ENCODE measurements at regions of chr2 and their contacts with region 1.

Region 1: DNA sequence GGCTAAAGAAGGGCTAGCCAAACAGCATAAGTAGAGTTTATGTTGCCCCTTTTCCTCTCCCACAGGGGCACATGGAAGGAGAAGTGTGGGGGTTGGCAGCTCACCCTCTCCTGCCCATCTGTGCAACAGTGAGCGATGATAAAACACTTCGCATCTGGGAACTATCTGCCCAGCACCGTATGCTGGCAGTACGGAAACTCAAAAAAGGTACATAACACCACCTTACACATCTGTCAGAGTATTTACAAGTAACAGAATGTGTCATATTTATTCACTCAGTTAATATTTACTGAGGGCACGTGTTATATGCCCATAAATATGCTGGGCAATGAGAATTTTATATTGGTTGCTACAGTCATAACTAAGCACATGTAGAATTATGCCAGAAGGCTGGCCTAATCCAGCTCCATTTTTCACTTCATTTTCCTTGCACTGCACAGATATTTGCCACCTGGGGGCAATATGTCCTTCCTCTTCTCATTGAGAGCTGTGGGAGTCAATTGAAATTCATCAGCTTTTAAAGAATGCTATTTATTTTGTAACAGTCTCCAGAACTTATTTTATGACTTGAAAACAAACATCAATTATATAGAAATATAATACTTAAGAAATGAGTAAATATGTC is 150.6 kb downstream of the RTN4 start:
- DNase-seq: no peak
- H3K4me3 ChIP-seq: no peak overlapping the region
- H3K27ac ChIP-seq: no peak overlapping the region
- H3K4me1 ChIP-seq: no peaks in the 10 kb centered on the region
- H3K27me3 ChIP-seq: peaks cover 37% of the 10 kb centered on the region
- CTCF ChIP-seq: peak; percentile 65

Region 2: GRCh38 chr2:54597153-54597848 is 302.4 kb before region 1 on chr2:
- intact Hi-C with region 1: no loop called
- DNase-seq: peak; percentile 77
- H3K4me3 ChIP-seq: no peak overlapping the region
- H3K27ac ChIP-seq: peak overlapping the region; percentile 80
- H3K4me1 ChIP-seq: peaks cover 99% of the 10 kb centered on the region
- H3K27me3 ChIP-seq: no peaks in the 10 kb centered on the region
- CTCF ChIP-seq: no peak

Region 3: GRCh38 chr2:54723131-54723995 is 176.3 kb before region 1 on chr2 and contains the start of gene EML6:
- intact Hi-C with region 1: no loop called
- DNase-seq: peak; percentile 97
- H3K4me3 ChIP-seq: peak within 1 kb of the TSS; percentile 87
- H3K27ac ChIP-seq: peak within 1 kb of the TSS; percentile 83
- H3K4me1 ChIP-seq: peaks cover 25% of the 10 kb centered on the region
- H3K27me3 ChIP-seq: peaks cover 5% of the 10 kb centered on the region
- CTCF ChIP-seq: peak; percentile 44
- total RNA-seq, gene EML6: 0.77 TPM

Region 4: DNA sequence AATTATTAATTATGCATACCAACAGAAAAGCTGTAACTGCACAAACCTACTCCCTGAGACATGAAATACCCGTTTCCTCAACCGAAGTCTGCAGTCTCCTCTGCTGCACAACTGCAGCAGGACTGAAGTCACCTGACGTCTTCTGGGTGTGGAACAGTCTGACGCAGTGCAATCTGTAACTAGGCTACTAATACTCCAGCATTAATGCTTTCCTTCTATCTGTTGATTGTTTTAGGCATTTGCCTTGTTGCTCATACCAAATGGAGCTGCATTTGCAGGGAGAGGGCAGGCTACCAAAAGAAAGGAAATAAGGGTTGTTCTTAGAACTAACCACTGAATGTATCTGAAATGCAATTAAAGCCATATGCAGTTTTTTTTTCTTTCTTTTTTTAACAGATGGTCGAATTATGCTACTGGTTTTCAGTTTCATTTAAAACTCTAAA is 110.5 kb after region 1 on chr2:
- intact Hi-C with region 1: loop called (anchors 10 kb)
- DNase-seq: no peak
- H3K4me3 ChIP-seq: peak overlapping the region; percentile 52
- H3K27ac ChIP-seq: peak overlapping the region; percentile 36
- H3K4me1 ChIP-seq: peaks cover 92% of the 10 kb centered on the region
- H3K27me3 ChIP-seq: no peaks in the 10 kb centered on the region
- CTCF ChIP-seq: no peak

Region 5: DNA sequence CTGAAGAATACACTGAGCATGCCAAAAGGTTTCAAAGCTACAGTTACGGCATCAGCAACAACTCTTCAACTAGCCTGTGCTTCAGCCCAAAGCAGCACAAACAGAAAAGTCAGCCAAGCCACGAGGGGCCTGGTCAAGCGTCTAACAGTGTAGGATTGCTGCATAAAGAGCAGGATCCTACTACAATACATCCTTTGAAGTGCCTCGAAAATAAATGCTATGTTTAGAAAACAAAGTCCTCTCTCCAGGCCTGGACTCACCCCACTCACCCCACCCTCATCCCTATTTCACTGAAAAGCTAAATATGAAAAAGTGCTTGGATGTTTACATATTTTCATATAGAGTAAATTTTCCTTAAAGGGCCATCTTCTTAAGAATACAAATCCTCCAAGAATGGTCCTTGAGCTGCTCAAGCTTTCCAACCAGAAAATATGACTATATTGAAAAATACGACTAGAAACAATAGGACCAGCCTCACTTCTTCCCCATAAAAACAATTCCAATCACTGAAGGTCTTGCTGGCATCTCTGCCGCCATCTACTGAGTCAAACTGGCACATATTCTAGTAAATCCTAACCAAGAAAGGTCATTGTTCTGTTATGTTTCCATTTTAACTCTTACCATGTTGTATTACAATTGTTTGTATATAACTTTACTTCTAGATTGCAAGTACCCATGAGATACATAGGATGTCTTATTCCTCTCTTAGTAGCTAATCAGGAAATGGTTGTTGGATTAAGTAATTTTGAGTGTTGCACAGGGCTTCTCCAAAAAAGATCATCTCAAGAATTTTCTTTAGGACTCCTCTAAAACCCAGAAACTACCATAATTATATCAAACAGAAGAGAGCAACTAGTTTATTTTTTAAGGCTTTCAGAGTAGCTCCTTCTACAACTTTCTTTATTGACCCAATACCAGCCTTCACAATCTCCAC is 268.8 kb after region 1 on chr2:
- intact Hi-C with region 1: loop called (anchors 5 kb)
- DNase-seq: no peak
- H3K4me3 ChIP-seq: no peak overlapping the region
- H3K27ac ChIP-seq: peak overlapping the region; percentile 36
- H3K4me1 ChIP-seq: peaks cover 20% of the 10 kb centered on the region
- H3K27me3 ChIP-seq: no peaks in the 10 kb centered on the region
- CTCF ChIP-seq: peak; percentile 76

Measured in left ventricle myocardium inferior (tissue), 1 donor.